Activated CD4-positive, alpha-beta memory T cell treated with anti-CD3 and anti-CD28 coated beads for 36 hours (primary cell): ENCODE measurements at regions of chr2 and their contacts with region 1.

Region 1: GRCh38 chr2:11154923-11155380 is 315 bp upstream of the SLC66A3 start:
- DNase-seq: peak; percentile 99
- H3K4me3 Mint-ChIP-seq: peak overlapping the region; percentile 77
- H3K27ac Mint-ChIP-seq: peak overlapping the region; percentile 74
- H3K4me1 Mint-ChIP-seq: peaks cover 16% of the 10 kb centered on the region
- H3K27me3 Mint-ChIP-seq: no peaks in the 10 kb centered on the region

Region 2: DNA sequence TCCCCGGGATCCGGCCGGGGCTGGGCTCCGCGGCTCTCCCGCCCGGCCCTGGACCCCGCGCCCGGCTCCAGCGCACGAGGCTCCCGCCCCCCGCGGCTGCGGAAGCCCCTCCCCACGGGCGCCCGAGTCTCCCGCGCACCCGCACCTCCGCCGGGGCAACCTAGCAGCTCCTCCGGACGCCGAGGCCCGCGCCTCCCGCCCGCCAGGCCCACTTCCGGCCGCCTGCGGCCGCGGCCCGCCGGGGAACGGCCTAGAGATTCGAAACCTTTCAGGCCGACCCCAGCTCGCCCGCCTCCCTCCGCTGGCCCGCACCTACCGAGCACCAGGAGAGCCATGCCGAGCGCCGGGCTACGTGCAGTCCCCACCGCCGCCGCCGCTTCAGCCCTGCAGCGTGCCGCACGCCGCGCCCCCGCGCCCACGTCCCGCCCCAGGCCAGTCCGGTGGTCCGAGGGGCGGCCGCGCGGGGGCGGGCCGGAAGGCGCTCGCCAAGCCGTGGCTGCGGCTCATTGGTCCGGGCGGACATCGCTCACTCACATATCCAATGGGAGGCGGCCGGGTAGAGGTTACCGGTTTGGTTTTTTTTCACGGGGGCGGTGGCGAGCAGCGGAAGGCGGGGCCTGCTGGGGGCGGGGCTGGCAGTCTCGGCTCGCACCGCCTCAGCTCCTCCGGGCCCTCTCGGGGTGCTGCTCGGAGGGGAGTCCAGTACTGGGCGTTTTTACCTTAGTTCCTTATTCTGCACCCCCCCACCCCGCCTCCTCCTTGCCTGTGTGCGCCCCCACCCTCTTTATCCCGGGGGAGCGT is 342.4 kb before region 1 on chr2 and contains the start of gene PDIA6:
- CTCF ChIA-PET with region 1: no interaction called
- POLR2A ChIA-PET with region 1: no interaction called
- intact Hi-C with region 1: loop called (anchors 1 kb)
- DNase-seq: peak; percentile 97
- H3K4me3 Mint-ChIP-seq: peak within 1 kb of the TSS; percentile 88
- H3K27ac Mint-ChIP-seq: peak within 1 kb of the TSS; percentile 90
- H3K4me1 Mint-ChIP-seq: peaks cover 34% of the 10 kb centered on the region
- H3K27me3 Mint-ChIP-seq: no peaks in the 10 kb centered on the region
- total RNA-seq, gene PDIA6: 176 to 181 TPM

Region 3: DNA sequence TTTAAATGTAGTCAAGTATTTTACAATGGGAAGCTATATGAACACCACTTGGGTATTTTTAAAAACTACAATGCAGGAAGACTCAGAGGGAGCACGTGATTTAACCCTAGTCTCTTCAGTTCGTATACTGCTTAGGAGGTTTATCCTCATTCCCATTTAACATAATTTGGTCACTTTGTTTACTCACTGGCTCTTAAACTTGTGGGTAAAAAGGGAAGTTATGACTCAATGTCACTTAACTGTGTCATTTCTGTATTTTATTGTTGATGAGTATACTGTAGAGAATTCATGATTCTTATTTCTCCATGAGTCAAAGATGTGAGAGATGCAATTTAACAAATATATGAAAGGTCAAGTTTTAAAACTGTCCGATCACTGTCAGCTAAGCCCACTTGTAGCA is 48.5 kb after region 1 on chr2:
- CTCF ChIA-PET with region 1: no interaction called
- POLR2A ChIA-PET with region 1: no interaction called
- intact Hi-C with region 1: loop called (anchors 2 kb)
- DNase-seq: no peak
- H3K4me3 Mint-ChIP-seq: no peak overlapping the region
- H3K27ac Mint-ChIP-seq: no peak overlapping the region
- H3K4me1 Mint-ChIP-seq: peaks cover 16% of the 10 kb centered on the region
- H3K27me3 Mint-ChIP-seq: no peaks in the 10 kb centered on the region

Region 4: GRCh38 chr2:11344342-11344955 is 189.5 kb after region 1 on chr2 and contains the start of gene ROCK2:
- CTCF ChIA-PET with region 1: no interaction called
- POLR2A ChIA-PET with region 1: interaction called, 8 read pairs
- intact Hi-C with region 1: loop called (anchors 1 kb)
- DNase-seq: peak; percentile 80
- H3K4me3 Mint-ChIP-seq: peak within 1 kb of the TSS; percentile 98
- H3K27ac Mint-ChIP-seq: peak within 1 kb of the TSS; percentile 89
- H3K4me1 Mint-ChIP-seq: peaks cover 27% of the 10 kb centered on the region
- H3K27me3 Mint-ChIP-seq: no peaks in the 10 kb centered on the region
- total RNA-seq, gene ROCK2: 16.6 to 19.2 TPM

Region 5: DNA sequence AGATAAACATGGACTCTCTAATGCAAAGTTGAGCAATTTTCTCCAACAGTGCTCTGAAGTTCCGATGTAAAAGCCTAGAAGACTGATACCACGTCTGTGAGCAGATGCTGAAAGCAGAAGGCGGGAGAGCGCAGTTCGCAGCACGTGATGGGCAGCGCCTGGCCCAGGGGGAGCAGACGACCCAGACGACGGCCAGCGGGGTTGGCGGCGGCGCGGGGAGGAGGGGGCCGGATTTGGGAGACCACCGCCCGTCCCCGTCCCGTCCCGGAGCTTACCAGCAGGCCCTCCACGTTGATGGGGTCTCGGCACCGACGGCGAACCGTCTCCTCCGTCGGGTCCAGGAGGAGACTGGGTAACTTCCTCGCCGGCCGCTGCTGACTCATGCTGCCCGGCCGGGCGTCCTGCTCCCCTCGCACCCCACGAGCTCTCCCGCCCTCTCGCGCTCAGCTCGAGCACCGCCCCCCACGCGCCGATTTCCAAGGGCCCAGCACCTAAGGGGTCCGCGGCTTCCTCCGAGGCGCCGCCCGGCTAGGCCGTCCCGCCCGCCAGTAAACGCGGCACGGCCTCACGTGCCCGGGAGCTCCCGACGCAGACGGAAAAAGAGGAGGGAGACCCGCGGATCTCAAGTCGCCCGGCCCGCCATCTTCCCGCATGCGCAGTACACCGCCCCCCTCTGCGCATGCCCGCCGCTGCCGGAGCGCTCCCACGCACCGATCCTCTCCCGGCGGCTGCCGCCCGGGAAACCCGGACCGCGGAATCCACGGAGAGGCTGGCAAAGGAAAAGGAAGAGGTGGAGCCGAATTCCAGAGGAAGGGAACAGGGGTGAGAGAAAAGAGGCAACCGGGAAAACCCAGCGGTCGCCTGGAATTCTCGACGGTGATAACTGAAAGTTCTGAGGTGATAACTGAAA is 310.8 kb after region 1 on chr2 and contains the start of gene E2F6:
- CTCF ChIA-PET with region 1: no interaction called
- POLR2A ChIA-PET with region 1: no interaction called
- intact Hi-C with region 1: loop called (anchors 10 kb)
- DNase-seq: peak; percentile 92
- H3K4me3 Mint-ChIP-seq: peak within 1 kb of the TSS; percentile 91
- H3K27ac Mint-ChIP-seq: peak within 1 kb of the TSS; percentile 83
- H3K4me1 Mint-ChIP-seq: peaks cover 36% of the 10 kb centered on the region
- H3K27me3 Mint-ChIP-seq: no peaks in the 10 kb centered on the region
- total RNA-seq, gene E2F6: 9.9 to 10.3 TPM

Region 6: DNA sequence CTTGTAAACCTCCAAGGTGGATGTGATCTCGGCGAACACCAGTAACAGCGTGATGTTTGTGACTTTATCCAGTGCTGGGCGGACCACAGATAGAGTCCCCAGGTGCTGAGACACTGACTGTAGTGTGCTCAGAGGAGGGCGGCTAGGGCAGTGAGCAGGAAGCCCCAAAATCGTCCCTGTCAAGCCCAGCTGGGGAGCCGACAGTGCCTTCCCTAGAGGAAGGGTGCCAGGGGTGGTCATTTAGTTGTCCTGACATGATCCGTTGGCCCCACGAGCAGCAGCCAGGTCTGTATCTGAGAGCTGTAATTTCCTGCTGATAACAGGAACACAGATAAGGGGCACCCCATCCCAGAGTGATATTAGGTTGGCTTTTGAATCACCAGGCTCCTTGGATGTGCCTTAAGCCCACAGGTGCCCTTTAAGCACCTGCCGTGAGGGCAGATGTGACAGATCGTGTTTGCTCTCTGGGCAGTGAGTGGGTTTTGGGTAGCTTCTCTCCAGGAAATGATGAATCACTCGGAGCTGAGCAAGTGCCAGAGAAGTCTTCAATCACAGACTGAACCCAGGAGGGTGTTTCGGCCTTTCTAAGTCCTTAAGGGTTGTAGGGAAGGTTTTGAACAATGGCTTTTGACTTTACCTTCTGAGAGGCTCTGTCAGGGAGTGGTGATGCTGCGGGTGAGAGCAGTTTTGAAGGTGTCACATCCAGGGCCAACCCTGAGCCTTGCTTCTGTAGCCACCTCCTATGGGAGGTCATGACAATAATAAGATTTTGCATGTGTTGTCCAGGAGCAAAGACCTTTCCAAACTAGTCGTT is 599.1 kb after region 1 on chr2:
- CTCF ChIA-PET with region 1: no interaction called
- POLR2A ChIA-PET with region 1: no interaction called
- intact Hi-C with region 1: loop called (anchors 5 kb)
- DNase-seq: peak; percentile 87
- H3K4me3 Mint-ChIP-seq: peak overlapping the region; percentile 72
- H3K27ac Mint-ChIP-seq: peak overlapping the region; percentile 97
- H3K4me1 Mint-ChIP-seq: peaks cover 90% of the 10 kb centered on the region
- H3K27me3 Mint-ChIP-seq: no peaks in the 10 kb centered on the region